HAP-1 (cell line): ENCODE measurements at regions of chr1 and their contacts with region 1.

Region 1: GRCh38 chr1:101025657-101026504 is at the start of gene DPH5:
- DNase-seq: peak; percentile 84 to 95
- H3K4me3 ChIP-seq: peak within 1 kb of the TSS; percentile 53
- H3K4me1 ChIP-seq: peaks cover 19% of the 10 kb centered on the region
- H3K27me3 ChIP-seq: no peaks in the 10 kb centered on the region

Region 2: GRCh38 chr1:101148980-101149379 is 123.1 kb after region 1 on chr1:
- in situ Hi-C with region 1: no loop called
- DNase-seq: no peak
- H3K4me3 ChIP-seq: no peak overlapping the region
- H3K4me1 ChIP-seq: peaks cover 11% of the 10 kb centered on the region
- H3K27me3 ChIP-seq: no peaks in the 10 kb centered on the region

Region 3: GRCh38 chr1:101238681-101239094 is 212.8 kb after region 1 on chr1:
- in situ Hi-C with region 1: loop called (anchors 10 kb)
- DNase-seq: peak; percentile 84 to 94
- H3K4me3 ChIP-seq: peak overlapping the region; percentile 58
- H3K4me1 ChIP-seq: peaks cover 15% of the 10 kb centered on the region
- H3K27me3 ChIP-seq: no peaks in the 10 kb centered on the region